Activated CD4-positive, alpha-beta T cell treated with anti-CD3 and anti-CD28 coated beads, Interleukin-2, amount 10 ng/mL, durations not matched to agents 7 days and 5 days (primary cell): ENCODE measurements at regions of chr17 and their contacts with region 1.

Region 1: GRCh38 chr17:31857920-31858641 is 963 bp downstream of the COPRS start:
- DNase-seq: no peak
- H3K4me3 Mint-ChIP-seq: peak overlapping the region; percentile 81
- H3K27ac Mint-ChIP-seq: peak overlapping the region; percentile 84
- H3K4me1 Mint-ChIP-seq: peaks cover 19% of the 10 kb centered on the region
- H3K27me3 Mint-ChIP-seq: no peaks in the 10 kb centered on the region

Region 2: GRCh38 chr17:31842183-31843069 is 15.7 kb before region 1 on chr17:
- CTCF ChIA-PET with region 1: interaction called, 10 read pairs
- POLR2A ChIA-PET with region 1: no interaction called
- DNase-seq: peak; percentile 77
- H3K4me3 Mint-ChIP-seq: no peak overlapping the region
- H3K27ac Mint-ChIP-seq: no peak overlapping the region
- H3K4me1 Mint-ChIP-seq: no peaks in the 10 kb centered on the region
- H3K27me3 Mint-ChIP-seq: peaks cover 9% of the 10 kb centered on the region